T-cell (primary cell): ENCODE measurements at regions of chr2 and their contacts with region 1.

Region 1: DNA sequence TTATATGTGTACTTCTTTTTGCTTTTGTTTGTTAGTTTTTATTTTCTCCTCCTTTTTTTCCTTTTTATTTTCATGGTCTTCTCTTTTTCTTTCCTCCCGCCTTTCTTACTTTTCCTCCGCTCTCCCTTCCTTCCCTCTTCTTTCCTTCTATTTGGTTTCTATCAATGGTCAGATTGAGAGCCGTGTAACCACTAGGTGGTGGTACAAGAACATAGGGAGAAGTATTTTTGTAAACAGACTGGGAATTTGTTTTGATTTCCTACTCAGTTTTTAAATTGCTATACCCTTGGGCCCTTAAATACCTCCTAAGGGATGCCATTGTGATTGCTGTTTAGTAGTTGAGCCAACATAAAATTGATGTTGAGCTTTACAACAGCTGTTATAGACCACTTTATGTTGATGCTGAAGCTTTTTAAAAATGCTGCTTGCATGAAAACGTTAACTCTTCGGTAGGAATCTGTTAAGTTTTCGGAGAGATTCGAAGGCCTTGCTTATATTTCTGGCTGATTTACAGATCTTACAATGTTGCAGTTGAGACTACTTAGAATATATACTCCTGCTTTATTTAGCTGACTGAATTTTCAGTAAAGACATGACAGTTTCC is 124.2 kb downstream of the UBE2E3 start:
- DNase-seq: peak in 8 of 35 experiments; percentile 5 to 77 (median 26)
- ATAC-seq: peak in 3 of 4 experiments; percentile 20 to 70 (median 45)
- H3K4me3 ChIP-seq: no peak overlapping the region
- H3K4me3 Mint-ChIP-seq: peak overlapping the region in 1 of 3 donors; percentile 2
- H3K27ac ChIP-seq: peak overlapping the region; percentile 19
- H3K27ac Mint-ChIP-seq: peak overlapping the region; percentile 24 to 59
- H3K4me1 ChIP-seq: peaks cover 11 to 32% of the 10 kb centered on the region in 2 experiments
- H3K4me1 Mint-ChIP-seq: peaks cover 44 to 48% (median 47%) of the 10 kb centered on the region in 3 donors
- H3K27me3 ChIP-seq: no peaks in the 10 kb centered on the region
- H3K27me3 Mint-ChIP-seq: no peaks in the 10 kb centered on the region

Region 2: DNA sequence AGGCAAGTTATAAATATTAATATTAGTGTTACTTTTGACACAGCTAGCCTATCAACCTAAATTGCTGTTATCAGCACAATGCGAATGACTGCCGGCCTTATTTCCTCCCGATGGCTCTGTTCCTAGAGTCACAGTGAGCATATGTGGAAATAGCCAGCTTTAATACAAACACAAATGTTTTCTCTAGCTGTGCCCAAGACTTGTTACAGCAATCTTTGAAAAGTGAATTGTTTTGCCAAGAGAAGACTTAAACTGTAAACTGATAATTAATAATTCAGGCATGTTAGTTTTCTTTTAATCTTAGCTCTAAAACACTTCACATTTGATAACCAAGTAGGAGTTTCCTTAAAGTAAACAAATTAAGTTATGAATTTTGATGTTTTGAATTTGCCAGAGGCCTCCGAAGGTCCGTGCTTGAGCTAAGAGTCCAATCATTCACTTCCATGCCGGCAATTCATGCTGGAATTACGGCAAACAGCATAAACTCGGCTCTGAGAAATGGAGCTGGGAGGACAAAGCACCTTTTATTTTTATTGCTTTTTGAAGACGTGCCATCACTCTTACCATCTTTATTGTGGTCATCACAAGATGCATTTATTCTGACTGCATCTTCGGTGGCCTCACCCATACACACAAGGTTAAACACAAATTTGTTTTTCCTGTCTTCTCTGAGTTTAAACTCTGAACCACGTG is 913.0 kb before region 1 on chr2:
- CTCF ChIA-PET with region 1: no interaction called
- POLR2A ChIA-PET with region 1: no interaction called
- DNase-seq: no peak
- ATAC-seq: no peak
- H3K4me3 ChIP-seq: no peak overlapping the region
- H3K4me3 Mint-ChIP-seq: no peak overlapping the region
- H3K27ac ChIP-seq: no peak overlapping the region
- H3K27ac Mint-ChIP-seq: no peak overlapping the region
- H3K4me1 ChIP-seq: no peaks in the 10 kb centered on the region
- H3K4me1 Mint-ChIP-seq: peaks cover 0 to 5% (median 3%) of the 10 kb centered on the region in 3 donors
- H3K27me3 ChIP-seq: no peaks in the 10 kb centered on the region
- H3K27me3 Mint-ChIP-seq: peaks cover 0 to 5% of the 10 kb centered on the region in 2 donors

Region 3: DNA sequence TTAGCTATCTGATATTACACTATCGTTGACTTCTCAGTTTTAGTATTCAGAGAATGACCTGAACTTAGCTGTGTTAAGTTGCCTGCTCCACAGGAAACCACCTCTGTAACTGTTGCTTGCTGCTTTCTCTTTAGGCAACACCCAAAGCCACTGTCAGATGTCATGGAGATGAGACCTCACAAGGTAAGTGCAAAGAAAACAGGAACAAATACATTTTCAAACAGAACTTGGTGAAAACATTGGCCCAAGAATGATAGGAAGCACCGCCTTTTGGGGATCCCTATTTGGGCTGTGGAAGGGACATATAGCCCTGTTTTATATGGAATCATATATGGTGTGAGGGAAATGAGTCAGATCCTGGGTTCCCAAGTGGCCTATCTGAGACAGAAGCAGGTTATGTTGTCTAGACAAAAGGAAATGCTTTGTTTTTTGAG is 19.2 kb after region 1 on chr2:
- CTCF ChIA-PET with region 1: interaction called, 8 to 11 read pairs
- POLR2A ChIA-PET with region 1: interaction called in 1 of 2 experiments, 3 read pairs
- DNase-seq: peak in 34 of 35 experiments; percentile 24 to 89 (median 60)
- ATAC-seq: peak; percentile 94 to 98 (median 96)
- H3K4me3 ChIP-seq: peak overlapping the region; percentile 6 to 39
- H3K4me3 Mint-ChIP-seq: peak overlapping the region; percentile 65 to 72 (median 70)
- H3K27ac ChIP-seq: peak overlapping the region; percentile 100
- H3K27ac Mint-ChIP-seq: peak overlapping the region; percentile 96 to 100
- H3K4me1 ChIP-seq: peaks cover 28 to 51% of the 10 kb centered on the region in 2 experiments
- H3K4me1 Mint-ChIP-seq: peaks cover 63 to 81% (median 73%) of the 10 kb centered on the region in 3 donors
- H3K27me3 ChIP-seq: no peaks in the 10 kb centered on the region
- H3K27me3 Mint-ChIP-seq: no peaks in the 10 kb centered on the region

Region 4: GRCh38 chr2:181326661-181327060 is 222.0 kb after region 1 on chr2:
- CTCF ChIA-PET with region 1: interaction called, 3 to 12 read pairs
- POLR2A ChIA-PET with region 1: no interaction called
- DNase-seq: no peak
- ATAC-seq: peak in 1 of 4 experiments; percentile 43
- H3K4me3 ChIP-seq: no peak overlapping the region
- H3K4me3 Mint-ChIP-seq: no peak overlapping the region
- H3K27ac ChIP-seq: no peak overlapping the region
- H3K27ac Mint-ChIP-seq: peak overlapping the region in 1 of 2 donors; percentile 64
- H3K4me1 ChIP-seq: peaks cover 0 to 4% of the 10 kb centered on the region in 2 experiments
- H3K4me1 Mint-ChIP-seq: peaks cover 11 to 25% (median 15%) of the 10 kb centered on the region in 3 donors
- H3K27me3 ChIP-seq: no peaks in the 10 kb centered on the region
- H3K27me3 Mint-ChIP-seq: no peaks in the 10 kb centered on the region

Region 5: DNA sequence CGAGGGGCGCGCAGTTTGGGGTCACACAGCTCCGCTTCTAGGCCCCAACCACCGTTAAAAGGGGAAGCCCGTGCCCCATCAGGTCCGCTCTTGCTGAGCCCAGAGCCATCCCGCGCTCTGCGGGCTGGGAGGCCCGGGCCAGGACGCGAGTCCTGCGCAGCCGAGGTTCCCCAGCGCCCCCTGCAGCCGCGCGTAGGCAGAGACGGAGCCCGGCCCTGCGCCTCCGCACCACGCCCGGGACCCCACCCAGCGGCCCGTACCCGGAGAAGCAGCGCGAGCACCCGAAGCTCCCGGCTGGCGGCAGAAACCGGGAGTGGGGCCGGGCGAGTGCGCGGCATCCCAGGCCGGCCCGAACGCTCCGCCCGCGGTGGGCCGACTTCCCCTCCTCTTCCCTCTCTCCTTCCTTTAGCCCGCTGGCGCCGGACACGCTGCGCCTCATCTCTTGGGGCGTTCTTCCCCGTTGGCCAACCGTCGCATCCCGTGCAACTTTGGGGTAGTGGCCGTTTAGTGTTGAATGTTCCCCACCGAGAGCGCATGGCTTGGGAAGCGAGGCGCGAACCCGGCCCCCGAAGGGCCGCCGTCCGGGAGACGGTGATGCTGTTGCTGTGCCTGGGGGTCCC is 352.6 kb after region 1 on chr2 and contains the start of gene ITGA4:
- CTCF ChIA-PET with region 1: interaction called, 8 to 23 read pairs
- POLR2A ChIA-PET with region 1: interaction called in 1 of 2 experiments, 3 read pairs
- DNase-seq: peak; percentile 66 to 92 (median 82)
- ATAC-seq: peak; percentile 84 to 90 (median 88)
- H3K4me3 ChIP-seq: peak within 1 kb of the TSS; percentile 84 to 97
- H3K4me3 Mint-ChIP-seq: peak within 1 kb of the TSS; percentile 90 to 97 (median 94)
- H3K27ac ChIP-seq: peak within 1 kb of the TSS; percentile 98
- H3K27ac Mint-ChIP-seq: peak within 1 kb of the TSS; percentile 94 to 98
- H3K4me1 ChIP-seq: peaks cover 17 to 44% of the 10 kb centered on the region in 2 experiments
- H3K4me1 Mint-ChIP-seq: peaks cover 43 to 70% (median 49%) of the 10 kb centered on the region in 3 donors
- H3K27me3 ChIP-seq: no peaks in the 10 kb centered on the region
- H3K27me3 Mint-ChIP-seq: no peaks in the 10 kb centered on the region
- total RNA-seq, gene ITGA4: 150 to 318 (median 255) TPM

Region 6: GRCh38 chr2:181466661-181467576 is 362.3 kb after region 1 on chr2:
- CTCF ChIA-PET with region 1: interaction called, 5 to 36 read pairs
- POLR2A ChIA-PET with region 1: interaction called in 1 of 2 experiments, 4 read pairs
- DNase-seq: peak; percentile 42 to 90 (median 72)
- ATAC-seq: peak in 1 of 4 experiments; percentile 79
- H3K4me3 ChIP-seq: peak overlapping the region in 1 of 2 donors; percentile 0
- H3K4me3 Mint-ChIP-seq: peak overlapping the region; percentile 40 to 57 (median 50)
- H3K27ac ChIP-seq: peak overlapping the region; percentile 58
- H3K27ac Mint-ChIP-seq: peak overlapping the region; percentile 23 to 71
- H3K4me1 ChIP-seq: peaks cover 36 to 75% of the 10 kb centered on the region in 2 experiments
- H3K4me1 Mint-ChIP-seq: peaks cover 85 to 91% (median 88%) of the 10 kb centered on the region in 3 donors
- H3K27me3 ChIP-seq: no peaks in the 10 kb centered on the region
- H3K27me3 Mint-ChIP-seq: no peaks in the 10 kb centered on the region